ENCODE measurements at regions of chr1 and their contacts with region 1.

Region 1: DNA sequence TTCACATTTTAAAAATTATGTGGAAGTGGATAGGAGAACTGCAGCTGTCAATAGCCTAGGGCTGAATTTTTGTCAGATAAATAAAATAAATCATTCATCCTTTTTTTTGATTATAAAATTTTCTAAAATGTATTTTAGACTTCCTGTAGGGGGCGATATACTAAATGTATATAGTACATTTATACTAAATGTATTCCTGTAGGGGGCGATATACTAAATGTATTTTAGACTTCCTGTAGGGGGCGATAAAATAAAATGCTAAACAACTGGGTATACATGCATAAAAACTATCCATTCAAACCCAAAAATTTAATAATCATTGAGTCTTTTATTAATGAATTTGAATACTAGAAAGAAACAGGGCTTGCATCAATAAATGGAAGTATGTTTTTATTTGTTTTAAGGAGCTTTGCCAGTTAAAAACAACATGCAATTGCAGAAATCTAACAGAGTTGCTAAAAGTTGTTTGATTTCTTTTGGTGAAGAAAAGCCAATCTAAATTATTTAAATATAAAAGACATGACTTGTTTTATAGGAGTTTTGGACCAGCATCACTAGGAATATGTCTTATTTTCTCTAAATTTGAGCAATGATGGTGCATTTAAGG is 31.4 kb downstream of the CLCA1 start:
- DNase-seq: no peak
- H3K4me3 ChIP-seq: no peak overlapping the region
- CTCF ChIP-seq: peak; percentile 33

Region 2: GRCh38 chr1:86082183-86082582 is 417.9 kb before region 1 on chr1:
- CTCF ChIA-PET with region 1: no interaction called
- POLR2A ChIA-PET with region 1: no interaction called
- DNase-seq: no peak
- H3K4me3 ChIP-seq: no peak overlapping the region
- CTCF ChIP-seq: no peak

Region 3: DNA sequence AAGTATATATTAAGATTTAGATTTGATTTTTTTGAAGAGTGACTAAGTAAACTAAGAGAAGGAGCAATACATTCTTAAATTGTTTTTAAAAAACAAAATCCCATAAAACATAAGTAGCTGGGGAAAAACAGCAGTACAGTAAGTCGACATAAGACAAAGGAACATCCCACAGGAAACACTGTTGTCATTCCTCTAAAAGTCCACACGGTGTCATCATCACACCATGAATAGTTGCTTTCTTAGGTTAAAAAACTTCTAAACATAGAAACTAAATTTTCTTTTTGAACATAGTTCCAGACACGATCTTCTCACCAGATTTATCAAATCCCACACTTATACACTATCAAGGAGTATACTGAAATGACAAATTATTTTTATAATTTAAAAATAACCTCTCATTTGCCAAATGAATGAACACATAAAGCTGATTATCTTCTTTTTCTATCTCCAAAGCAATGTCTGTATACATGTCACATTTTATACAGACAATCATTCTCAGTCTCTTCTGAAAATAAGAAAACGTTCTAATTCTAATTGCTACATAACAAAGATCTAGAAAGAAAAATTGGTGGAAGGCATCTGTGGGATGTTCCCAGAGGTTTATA is 119.7 kb before region 1 on chr1:
- CTCF ChIA-PET with region 1: interaction called, 198 read pairs
- POLR2A ChIA-PET with region 1: no interaction called
- DNase-seq: peak; percentile 45
- H3K4me3 ChIP-seq: no peak overlapping the region
- CTCF ChIP-seq: peak; percentile 52

Region 4: GRCh38 chr1:86423873-86424272 is 76.2 kb before region 1 on chr1 and contains the start of gene CLCA2:
- CTCF ChIA-PET with region 1: interaction called, 11 read pairs
- POLR2A ChIA-PET with region 1: no interaction called
- DNase-seq: no peak
- H3K4me3 ChIP-seq: no peak within 1 kb of the TSS
- CTCF ChIP-seq: no peak

Region 5: GRCh38 chr1:86429835-86430234 is 70.3 kb before region 1 on chr1:
- CTCF ChIA-PET with region 1: interaction called, 21 read pairs
- POLR2A ChIA-PET with region 1: interaction called, 3 read pairs
- DNase-seq: peak; percentile 84
- H3K4me3 ChIP-seq: no peak overlapping the region
- CTCF ChIP-seq: no peak

Region 6: DNA sequence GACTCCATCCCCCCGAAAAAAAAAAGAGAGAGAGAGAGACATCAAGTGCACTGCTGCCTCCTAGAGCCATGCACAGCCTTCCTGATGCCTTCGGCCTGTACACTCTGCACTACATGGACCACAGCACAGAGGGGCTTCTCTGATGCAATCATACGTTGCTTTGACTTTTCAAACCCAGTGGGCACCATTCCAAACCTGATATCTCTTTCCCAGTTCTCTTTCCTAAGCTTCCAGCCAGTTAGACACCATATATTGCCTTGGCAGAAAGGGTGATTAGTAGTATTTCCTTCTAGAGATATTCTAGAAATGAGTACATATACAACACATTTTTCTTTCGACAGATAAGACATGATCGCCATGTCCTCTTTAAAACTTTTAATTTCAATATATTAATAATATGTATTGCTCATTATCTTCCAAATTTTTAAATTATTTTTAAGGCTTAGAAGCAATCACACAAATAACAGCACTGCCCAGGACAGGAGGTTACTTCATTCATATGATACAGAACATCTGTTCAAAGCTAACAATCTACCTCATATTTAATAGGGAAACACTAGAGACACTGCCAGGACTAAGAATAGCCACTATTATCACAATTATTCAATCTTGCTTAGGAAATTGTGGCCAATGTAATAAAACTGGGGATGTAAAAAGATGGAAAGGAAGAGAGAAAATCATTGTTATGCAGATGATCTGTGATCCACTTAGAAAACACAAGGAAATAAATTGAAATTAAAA is 21.5 kb before region 1 on chr1:
- CTCF ChIA-PET with region 1: interaction called, 112 read pairs
- POLR2A ChIA-PET with region 1: no interaction called
- DNase-seq: no peak
- H3K4me3 ChIP-seq: no peak overlapping the region
- CTCF ChIP-seq: no peak

Region 7: GRCh38 chr1:86487131-86487810 is 12.8 kb before region 1 on chr1:
- CTCF ChIA-PET with region 1: interaction called, 112 read pairs
- POLR2A ChIA-PET with region 1: no interaction called
- DNase-seq: peak; percentile 69
- H3K4me3 ChIP-seq: no peak overlapping the region
- CTCF ChIP-seq: no peak